MCF 10A (cell line): ENCODE measurements at regions of chr3 and their contacts with region 1.

Region 1: DNA sequence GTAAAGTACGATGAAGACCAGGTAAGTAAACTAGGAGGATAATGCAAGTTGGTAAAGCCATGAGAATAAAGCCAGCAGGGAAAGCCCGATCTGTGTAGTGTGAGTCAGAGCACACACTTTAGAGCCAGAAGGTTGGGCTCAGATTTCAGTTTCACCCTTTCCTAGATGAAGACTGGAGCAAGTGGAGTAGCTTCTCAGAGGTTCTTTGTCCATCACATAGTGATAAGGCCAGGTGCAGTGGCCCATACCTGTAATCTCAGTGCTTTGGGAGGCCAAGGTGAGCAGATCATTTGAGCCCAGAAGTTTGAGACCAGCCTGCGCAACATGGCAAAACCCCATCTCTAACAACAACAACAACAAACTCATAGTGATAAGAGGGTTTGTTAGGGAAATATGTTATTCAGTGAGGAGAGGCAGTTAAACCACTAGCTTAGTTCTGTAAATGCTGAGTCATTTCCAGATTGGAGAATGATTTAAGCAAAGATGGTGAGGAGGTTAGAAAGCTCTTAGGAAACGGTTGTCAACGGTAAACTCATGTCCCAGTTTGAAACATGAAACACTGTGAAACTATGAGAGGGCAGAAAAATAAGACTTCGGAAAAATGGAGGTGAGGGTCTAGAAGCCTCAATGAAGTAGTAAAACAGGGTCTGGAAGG is 39.0 kb downstream of the IL12A start:
- DNase-seq: peak; percentile 56
- H3K4me3 Mint-ChIP-seq: no peak overlapping the region
- H3K27ac Mint-ChIP-seq: no peak overlapping the region
- H3K4me1 Mint-ChIP-seq: peaks cover 13% of the 10 kb centered on the region
- H3K27me3 Mint-ChIP-seq: no peaks in the 10 kb centered on the region
- CTCF ChIP-seq: no peak

Region 2: DNA sequence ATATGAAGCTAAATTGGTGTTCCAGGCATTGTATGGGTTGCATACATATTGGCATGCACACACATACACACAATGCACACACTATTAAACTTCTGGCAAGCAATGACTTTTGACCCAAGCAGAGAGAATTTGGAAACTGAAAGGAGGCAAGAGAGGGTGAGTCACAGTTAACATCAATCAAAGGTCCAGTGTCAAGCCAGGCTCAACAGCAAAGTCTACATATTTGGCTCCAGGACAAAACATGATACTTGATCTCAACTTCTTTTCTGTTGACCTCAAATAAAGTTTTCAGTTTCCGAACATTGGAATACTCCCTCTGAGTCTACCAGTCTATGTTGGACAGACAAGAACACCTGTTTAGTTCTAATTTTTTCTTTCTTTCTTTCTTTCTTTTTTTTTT is 10.7 kb before region 1 on chr3:
- CTCF ChIA-PET with region 1: interaction called, 13 read pairs
- POLR2A ChIA-PET with region 1: no interaction called
- intact Hi-C with region 1: no loop called
- DNase-seq: peak; percentile 84
- H3K4me3 Mint-ChIP-seq: no peak overlapping the region
- H3K27ac Mint-ChIP-seq: no peak overlapping the region
- H3K4me1 Mint-ChIP-seq: peaks cover 5% of the 10 kb centered on the region
- H3K27me3 Mint-ChIP-seq: peaks cover 22% of the 10 kb centered on the region
- CTCF ChIP-seq: no peak

Region 3: DNA sequence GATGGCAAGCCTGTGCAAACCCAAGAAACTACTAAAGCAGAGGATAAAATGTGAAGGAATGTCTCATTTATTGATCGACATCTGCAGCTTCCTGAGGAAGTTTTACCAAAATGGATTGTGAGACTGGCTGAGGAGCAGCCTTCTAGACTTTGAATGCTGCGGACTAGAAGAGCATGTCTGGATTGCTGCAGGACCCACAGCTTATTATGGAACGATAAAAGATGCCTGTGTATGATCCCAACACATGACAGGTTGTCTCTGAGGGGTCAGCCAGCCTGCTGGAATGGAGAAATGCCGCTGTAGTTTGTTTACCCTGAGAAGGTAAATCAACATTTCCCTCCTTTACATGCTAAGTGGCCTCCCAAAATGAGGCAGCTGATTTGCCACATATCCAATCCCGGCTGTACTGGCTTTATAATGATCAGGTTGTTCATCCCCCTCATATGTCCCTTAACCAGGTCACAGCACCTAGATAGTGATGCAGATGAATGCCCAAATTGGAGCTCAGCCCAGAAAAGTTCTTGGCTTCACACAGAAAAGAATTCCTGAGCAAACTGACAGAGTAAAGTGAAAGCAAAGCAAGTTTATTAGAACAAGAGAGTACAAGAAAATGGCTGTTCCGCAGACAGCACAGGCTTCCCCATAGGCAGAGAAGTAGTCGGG is 24.8 kb after region 1 on chr3:
- CTCF ChIA-PET with region 1: interaction called, 29 read pairs
- POLR2A ChIA-PET with region 1: no interaction called
- intact Hi-C with region 1: no loop called
- DNase-seq: no peak
- H3K4me3 Mint-ChIP-seq: peak overlapping the region; percentile 29
- H3K27ac Mint-ChIP-seq: peak overlapping the region; percentile 6
- H3K4me1 Mint-ChIP-seq: peaks cover 12% of the 10 kb centered on the region
- H3K27me3 Mint-ChIP-seq: no peaks in the 10 kb centered on the region
- CTCF ChIP-seq: no peak

Region 4: DNA sequence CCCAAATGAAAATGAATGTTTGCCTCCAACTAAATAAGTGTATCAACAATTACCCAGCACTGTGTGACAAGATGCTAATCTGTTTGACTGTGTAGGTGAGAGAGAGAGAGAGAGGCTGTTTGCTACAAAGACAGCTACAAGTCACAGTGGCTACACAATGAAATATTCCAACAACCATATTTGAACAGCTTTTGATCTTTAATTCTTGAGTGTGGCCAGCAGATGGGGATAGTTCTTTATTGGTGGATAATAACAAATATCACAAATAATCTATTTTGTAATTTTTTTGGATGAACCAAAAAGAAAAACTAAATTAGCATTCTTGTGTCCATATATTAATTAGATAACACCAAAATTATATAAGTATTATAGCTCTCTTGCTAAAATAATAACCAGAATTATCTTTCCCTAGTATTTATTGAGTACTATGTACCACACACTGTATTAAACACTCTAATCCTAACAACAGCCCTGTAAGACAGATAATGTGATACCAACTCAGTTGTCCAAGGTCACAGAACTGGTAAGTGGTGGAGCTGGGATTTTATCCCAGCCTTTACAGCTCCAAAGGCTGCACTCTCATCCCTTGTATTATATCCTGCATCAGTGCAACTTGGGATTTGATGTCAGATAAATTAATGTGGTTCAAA is 135.7 kb after region 1 on chr3:
- CTCF ChIA-PET with region 1: interaction called, 22 read pairs
- POLR2A ChIA-PET with region 1: no interaction called
- intact Hi-C with region 1: loop called (anchors 2 kb)
- DNase-seq: peak; percentile 37
- H3K4me3 Mint-ChIP-seq: no peak overlapping the region
- H3K27ac Mint-ChIP-seq: no peak overlapping the region
- H3K4me1 Mint-ChIP-seq: peaks cover 4% of the 10 kb centered on the region
- H3K27me3 Mint-ChIP-seq: no peaks in the 10 kb centered on the region
- CTCF ChIP-seq: peak; percentile 39

Region 5: DNA sequence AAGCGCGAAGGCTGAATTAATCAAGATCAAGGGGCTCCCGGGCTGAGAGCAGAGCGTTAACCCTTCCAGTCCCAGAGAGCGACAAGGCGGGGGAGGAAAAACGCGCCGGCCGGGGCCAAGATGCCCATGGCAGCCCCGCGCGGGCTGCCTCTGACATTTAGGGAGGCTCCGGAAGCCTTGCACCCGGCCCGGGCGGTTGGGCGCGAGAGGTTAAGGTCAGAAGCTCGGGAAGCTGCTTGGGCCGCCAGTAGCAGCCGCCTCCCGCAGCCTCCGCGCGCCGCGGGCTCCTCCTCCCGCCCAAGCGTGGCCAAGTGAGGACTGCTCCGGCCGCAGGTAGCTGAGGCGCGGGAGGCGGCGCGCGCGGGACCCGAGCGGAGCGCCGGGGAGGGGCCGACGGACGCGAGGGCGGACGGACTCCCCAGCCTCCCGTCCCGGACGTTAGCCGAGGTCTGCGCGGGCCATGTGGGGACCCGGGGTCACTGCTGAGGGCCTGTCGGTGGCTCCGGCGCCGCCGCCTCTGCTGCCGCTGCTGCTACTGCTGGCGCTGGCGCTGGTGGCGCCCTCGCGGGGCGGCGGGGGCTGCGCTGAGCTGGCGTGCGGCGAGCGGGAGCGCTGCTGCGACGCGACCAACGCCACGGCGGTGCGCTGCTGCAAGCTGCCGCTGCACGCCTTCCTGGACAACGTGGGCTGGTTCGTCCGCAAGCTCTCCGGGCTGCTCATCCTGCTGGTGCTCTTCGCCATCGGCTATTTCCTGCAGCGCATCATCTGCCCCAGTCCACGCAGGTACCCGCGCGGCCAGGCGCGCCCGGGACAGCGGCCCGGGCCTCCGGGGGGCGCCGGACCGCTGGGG is 197.7 kb after region 1 on chr3 and contains the start of gene C3orf80:
- CTCF ChIA-PET with region 1: interaction called, 12 read pairs
- POLR2A ChIA-PET with region 1: no interaction called
- intact Hi-C with region 1: no loop called
- DNase-seq: peak; percentile 56
- H3K4me3 Mint-ChIP-seq: peak within 1 kb of the TSS; percentile 65
- H3K27ac Mint-ChIP-seq: no peak within 1 kb of the TSS
- H3K4me1 Mint-ChIP-seq: no peaks in the 10 kb centered on the region
- H3K27me3 Mint-ChIP-seq: no peaks in the 10 kb centered on the region
- CTCF ChIP-seq: no peak
- total RNA-seq, gene C3orf80: 0.28 and 0.29 TPM in 2 replicates

Region 6: DNA sequence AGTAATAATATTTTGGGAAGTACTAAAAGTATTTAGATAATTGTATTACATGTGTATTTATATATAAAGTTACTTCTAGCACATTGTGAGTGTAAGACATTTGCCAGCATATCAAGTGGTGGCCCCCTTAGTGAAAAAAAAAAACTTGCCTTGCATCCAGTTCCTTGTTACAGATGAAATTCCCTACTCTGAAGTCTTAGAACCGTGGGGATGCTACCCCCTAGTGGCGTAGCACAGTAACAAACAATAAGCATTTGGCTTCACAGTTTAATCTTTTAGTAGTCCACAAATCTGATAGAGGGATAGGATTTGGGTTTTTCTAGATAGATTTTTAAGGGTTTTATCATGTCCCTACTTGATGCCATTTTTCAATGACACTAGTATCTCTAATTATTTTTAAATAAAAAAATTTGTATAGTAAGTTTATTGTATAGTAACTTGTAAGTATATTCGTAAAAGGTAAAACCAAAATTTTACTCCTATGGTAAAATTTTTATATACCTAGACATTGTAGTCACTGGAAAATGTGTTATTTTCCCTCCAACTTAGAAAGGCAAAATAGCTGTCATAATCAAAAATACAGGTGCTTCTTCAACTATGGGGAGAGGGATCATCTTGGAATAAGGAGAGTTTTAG is 386.1 kb after region 1 on chr3:
- CTCF ChIA-PET with region 1: interaction called, 14 read pairs
- POLR2A ChIA-PET with region 1: no interaction called
- intact Hi-C with region 1: loop called (anchors 1 kb)
- DNase-seq: peak; percentile 79
- H3K4me3 Mint-ChIP-seq: no peak overlapping the region
- H3K27ac Mint-ChIP-seq: no peak overlapping the region
- H3K4me1 Mint-ChIP-seq: peaks cover 18% of the 10 kb centered on the region
- H3K27me3 Mint-ChIP-seq: no peaks in the 10 kb centered on the region
- CTCF ChIP-seq: peak; percentile 78